HepG2 (cell line): ENCODE measurements at regions of chr7 and their contacts with region 1.

Region 1: GRCh38 chr7:80288175-80289122 is 153.8 kb downstream of the GNAI1 start:
- DNase-seq: peak; percentile 15
- ATAC-seq: peak; percentile 75
- H3K4me3 ChIP-seq: no peak overlapping the region
- H3K27ac ChIP-seq: no peak overlapping the region
- H3K4me1 ChIP-seq: no peaks in the 10 kb centered on the region
- H3K27me3 ChIP-seq: no peaks in the 10 kb centered on the region
- CTCF ChIP-seq: peak; percentile 52
- EP300 ChIP-seq: no peak
- POLR2A ChIP-seq: no peak
- RAD21 ChIP-seq: peak; percentile 33; the same call in 1 of the 2 replicates

Region 2: DNA sequence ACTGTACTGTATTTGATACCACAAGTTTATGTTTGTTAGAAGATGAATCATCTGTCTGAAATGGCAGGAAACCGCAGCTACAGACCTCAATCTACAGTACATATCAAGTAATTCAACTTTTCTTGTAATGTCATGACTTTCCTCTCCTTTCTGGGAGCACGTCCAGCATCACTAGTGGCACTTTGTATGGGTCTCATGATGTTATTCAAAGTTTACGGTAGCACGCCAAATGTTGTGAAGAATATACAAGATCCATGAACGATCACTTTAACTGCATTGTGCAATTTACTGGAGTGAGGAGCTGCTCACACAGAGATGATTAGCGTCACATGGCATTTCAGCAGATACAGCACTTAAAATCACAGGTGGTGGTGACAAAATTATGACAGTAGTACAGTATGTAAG is 411.6 kb before region 1 on chr7:
- CTCF ChIA-PET with region 1: no interaction called
- POLR2A ChIA-PET with region 1: no interaction called
- in situ Hi-C with region 1: no loop called
- intact Hi-C with region 1: no loop called
- DNase-seq: no peak
- ATAC-seq: no peak
- H3K4me3 ChIP-seq: no peak overlapping the region
- H3K27ac ChIP-seq: no peak overlapping the region
- H3K4me1 ChIP-seq: no peaks in the 10 kb centered on the region
- H3K27me3 ChIP-seq: 0 out of 5 replicates have a peak, but pooled peaks cover 0 to 2% of the 10 kb centered on the region in 2 experiments
- CTCF ChIP-seq: no peak
- EP300 ChIP-seq: no peak
- POLR2A ChIP-seq: no peak
- RAD21 ChIP-seq: no peak

Region 3: DNA sequence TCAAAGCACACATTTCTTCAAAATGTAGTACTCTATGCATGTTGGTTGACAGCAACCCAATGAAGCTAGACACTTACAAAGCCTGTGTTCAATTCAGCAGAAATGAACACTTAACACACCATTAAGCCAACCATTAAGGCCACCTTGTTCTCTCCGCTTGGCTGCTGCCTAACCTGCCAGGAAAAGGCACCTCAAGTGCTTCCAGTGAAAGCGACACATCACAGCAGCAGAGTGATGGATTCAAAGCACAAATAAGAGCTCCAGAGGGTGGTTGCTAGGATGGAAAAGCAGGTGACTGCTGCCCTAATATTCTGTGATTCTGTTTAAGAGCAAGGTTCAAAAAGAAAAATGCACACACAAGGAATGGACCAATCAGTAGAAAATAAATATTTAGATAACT is 235.3 kb before region 1 on chr7:
- CTCF ChIA-PET with region 1: no interaction called
- POLR2A ChIA-PET with region 1: no interaction called
- in situ Hi-C with region 1: loop called (anchors 10 kb)
- intact Hi-C with region 1: no loop called
- DNase-seq: peak; percentile 3
- ATAC-seq: peak; percentile 35; the same call in 1 of the 3 replicates
- H3K4me3 ChIP-seq: no peak overlapping the region
- H3K27ac ChIP-seq: no peak overlapping the region
- H3K4me1 ChIP-seq: peaks cover 7% of the 10 kb centered on the region
- H3K27me3 ChIP-seq: no peaks in the 10 kb centered on the region
- CTCF ChIP-seq: no peak
- EP300 ChIP-seq: no peak
- POLR2A ChIP-seq: no peak
- RAD21 ChIP-seq: no peak

Region 4: GRCh38 chr7:80307227-80307856 is 18.9 kb after region 1 on chr7:
- CTCF ChIA-PET with region 1: no interaction called
- POLR2A ChIA-PET with region 1: no interaction called
- in situ Hi-C with region 1: no loop called
- intact Hi-C with region 1: no loop called
- DNase-seq: no peak
- ATAC-seq: no peak
- H3K4me3 ChIP-seq: no peak overlapping the region
- H3K27ac ChIP-seq: no peak overlapping the region
- H3K4me1 ChIP-seq: no peaks in the 10 kb centered on the region; the same call in 1 of the 2 replicates
- H3K27me3 ChIP-seq: no peaks in the 10 kb centered on the region
- CTCF ChIP-seq: no peak
- EP300 ChIP-seq: no peak
- POLR2A ChIP-seq: no peak
- RAD21 ChIP-seq: no peak

Region 5: DNA sequence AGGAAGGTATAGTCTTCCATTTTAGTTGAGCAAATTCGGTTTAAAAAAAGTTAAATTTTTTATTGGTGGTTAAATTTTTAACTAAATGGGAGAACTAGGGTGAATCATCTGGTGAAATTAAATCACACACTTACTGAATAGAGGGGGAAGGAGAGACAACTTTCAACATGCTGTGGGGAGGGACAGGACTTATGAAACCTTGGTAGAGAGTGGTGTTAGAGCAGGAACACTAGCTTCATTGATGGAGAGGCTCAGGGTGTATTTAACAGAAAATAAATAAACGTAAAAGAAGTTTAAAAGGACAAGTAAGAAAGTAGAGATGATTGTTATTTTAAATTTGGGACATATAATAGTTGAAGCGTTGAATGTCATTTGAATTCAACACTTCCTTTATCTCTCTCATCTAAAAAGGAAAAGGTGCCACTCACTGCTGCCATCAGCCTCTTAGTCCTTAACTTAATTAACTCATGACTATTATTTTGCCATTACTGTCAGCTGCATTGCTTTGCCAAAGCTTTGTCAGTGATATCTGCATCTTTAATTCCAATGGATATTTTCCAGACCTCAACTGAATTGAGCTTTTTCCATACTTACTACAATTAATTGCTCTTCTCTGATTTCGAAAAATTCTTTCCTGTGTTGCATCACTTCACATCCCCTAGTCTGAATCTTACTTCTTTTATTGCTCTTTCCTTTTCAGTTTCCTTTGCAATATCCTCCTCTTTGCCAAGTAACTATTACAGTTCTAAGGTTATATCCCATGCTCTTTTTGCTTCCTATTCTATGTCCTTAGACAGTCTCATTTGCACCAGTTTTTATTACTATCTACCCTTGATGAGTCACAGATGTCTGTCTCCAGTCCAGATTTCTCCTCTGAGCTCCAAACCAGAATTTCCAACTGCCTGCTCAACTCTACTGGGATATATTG is 151.7 kb after region 1 on chr7:
- CTCF ChIA-PET with region 1: no interaction called
- POLR2A ChIA-PET with region 1: no interaction called
- in situ Hi-C with region 1: no loop called
- intact Hi-C with region 1: no loop called
- DNase-seq: no peak
- ATAC-seq: no peak
- H3K4me3 ChIP-seq: no peak overlapping the region
- H3K27ac ChIP-seq: no peak overlapping the region
- H3K4me1 ChIP-seq: no peaks in the 10 kb centered on the region
- H3K27me3 ChIP-seq: no peaks in the 10 kb centered on the region
- CTCF ChIP-seq: no peak
- EP300 ChIP-seq: no peak
- POLR2A ChIP-seq: no peak
- RAD21 ChIP-seq: no peak

Region 6: DNA sequence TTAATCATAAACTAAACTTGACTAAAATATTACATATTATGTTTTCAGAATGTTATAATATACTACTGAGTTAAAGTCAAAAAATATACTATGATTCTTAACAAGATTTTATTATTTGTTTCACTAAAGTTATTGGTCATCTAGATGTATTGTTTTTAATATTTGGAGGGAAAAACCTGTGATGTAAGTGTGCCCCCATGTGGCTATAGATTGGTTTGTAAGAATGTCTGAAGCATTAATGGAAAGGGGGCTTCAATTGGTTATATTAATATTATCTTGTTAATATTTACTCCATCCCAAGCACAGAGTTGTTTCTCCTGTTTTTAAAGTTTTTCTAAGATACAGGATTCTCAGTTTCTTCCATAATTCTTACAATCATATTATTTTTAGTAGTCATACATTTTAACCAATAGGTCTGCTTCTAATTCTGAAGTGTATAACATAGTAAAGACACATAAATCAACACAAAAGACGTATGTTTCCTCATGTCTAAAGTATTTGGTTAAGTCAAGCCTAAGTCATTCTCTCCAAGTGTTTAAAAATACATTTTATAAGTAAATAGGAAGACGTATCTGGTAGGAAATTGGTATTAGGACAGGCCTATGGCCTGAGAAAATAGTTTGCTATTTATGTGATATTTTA is 165.4 kb after region 1 on chr7:
- CTCF ChIA-PET with region 1: no interaction called
- POLR2A ChIA-PET with region 1: no interaction called
- in situ Hi-C with region 1: no loop called
- intact Hi-C with region 1: loop called (anchors 1 kb)
- DNase-seq: peak; percentile 12
- ATAC-seq: no peak
- H3K4me3 ChIP-seq: no peak overlapping the region
- H3K27ac ChIP-seq: no peak overlapping the region
- H3K4me1 ChIP-seq: peaks cover 24% of the 10 kb centered on the region
- H3K27me3 ChIP-seq: no peaks in the 10 kb centered on the region
- CTCF ChIP-seq: peak; percentile 55
- EP300 ChIP-seq: no peak
- POLR2A ChIP-seq: no peak
- RAD21 ChIP-seq: no peak